Posterior cingulate gyrus (tissue), 11 donors: ENCODE measurements at regions of chr4 and their contacts with region 1.

Region 1: DNA sequence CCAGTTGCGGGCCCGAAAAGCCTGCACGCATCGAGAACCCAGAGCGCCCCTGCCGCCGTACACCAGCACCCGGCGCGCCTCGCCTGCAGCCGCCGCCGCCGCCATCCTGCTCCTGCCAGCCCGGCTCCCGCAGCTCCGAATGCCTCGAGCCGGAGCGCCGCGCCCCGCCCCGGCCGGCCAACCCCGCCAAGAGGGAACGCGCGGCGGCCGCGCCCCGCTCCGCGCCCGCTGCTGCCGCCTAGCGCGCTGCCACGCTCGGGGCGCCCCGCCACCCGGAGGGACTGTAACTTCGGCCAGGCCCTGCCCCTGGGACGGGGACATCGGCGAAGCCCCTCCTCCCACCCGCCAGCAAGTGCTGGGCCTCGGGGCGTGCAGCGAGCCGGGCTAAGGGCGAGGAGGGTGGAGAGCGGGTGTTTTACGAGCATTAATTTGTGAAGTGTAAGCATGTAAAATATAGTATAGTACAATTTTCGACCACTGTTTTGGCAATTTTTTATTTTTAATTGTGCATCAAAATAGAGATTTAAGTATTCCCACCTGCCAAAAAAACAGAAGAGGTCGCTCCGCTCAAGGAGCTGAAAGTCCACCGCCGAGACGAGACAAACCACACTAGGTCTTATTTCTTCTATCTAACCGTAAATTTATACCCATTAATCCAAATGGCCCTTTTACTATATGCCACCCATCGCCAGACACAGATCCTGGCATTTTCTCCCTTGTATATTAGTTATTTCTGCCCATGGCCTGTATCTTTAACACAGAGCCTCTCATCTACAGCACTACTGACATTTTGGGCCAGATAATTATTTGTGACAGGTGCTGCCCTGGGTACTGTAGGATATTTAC is at the start of gene QDPR:
- DNase-seq: peak; percentile 79 to 98 (median 87)

Region 2: GRCh38 chr4:17544205-17544604 is 32.0 kb after region 1 on chr4:
- intact Hi-C with region 1: loop called (anchors 2 kb)
- DNase-seq: peak; percentile 41 to 98 (median 78)